GM10248 (cell line): ENCODE measurements at regions of chr12 and their contacts with region 1.

Region 1: DNA sequence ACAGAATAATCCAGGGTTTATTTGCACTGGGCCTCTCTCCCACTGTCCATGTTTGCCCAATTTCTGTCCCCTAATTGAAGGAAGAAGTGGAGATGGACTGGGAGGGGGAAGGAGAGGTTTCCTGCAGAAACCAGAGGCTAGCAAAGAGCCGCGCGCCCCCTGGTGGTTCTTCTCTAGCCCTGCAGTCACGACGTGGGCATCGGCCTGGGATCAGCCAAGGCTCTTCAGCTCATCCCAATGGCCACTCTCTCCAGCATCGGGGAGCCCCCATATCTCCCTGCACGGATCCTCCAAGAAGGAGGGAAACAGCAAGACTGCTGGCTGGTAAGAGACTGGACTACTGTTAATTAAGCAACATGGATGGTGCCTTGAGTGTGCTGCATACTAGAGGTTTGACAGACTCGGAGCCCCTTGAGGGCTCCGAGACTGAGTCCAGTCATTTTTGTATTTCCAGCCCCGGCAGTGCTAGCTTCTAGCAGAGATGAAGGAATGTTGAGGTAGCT is 18.7 kb downstream of the ZBTB39 start:
- DNase-seq: peak; percentile 81
- CTCF ChIP-seq: peak; percentile 92

Region 2: DNA sequence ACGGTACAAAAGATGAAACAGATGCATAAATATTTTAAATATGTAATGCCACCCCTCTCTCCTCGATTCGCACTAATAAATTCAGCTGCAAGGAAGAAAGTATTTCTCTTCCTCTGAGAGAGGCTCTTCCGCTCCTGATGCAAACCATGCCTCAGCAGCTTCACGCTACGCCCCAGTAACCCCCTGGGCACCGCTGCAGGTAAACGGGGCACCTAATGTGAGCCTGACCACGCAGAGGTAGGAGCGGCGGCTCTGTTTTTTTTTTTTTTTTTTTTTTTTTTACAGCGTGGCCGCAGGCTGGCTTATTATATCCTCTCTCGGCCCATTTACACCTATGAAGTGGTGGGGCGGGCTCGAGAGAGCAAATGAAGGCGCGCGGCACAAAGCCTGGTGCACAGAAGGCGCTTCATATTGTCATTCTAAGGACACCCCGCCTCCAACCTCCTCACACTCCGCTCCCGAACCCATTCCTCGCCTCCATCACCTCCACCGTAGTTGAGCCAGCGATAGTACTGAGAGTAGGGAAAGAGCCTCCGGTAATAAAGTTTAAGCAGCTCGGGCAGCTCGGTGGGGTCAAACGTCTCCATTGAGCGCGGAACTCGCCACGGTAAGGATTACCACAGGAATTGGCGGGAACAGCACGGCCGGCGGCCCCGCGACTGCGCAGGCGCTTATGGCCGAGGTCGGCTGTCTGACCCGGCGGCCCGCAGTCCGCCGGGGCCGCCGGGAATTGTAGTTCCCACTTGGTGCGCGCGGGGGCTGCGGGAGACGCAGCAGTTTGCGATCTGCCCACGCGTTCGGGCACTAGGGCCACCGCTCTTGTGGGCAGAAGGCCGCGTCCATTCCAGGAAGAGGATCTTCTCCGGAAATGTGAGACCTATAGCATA is 235.6 kb before region 1 on chr12 and contains the start of gene PRIM1:
- CTCF ChIA-PET with region 1: interaction called, 84 read pairs
- POLR2A ChIA-PET with region 1: no interaction called
- DNase-seq: peak; percentile 94
- CTCF ChIP-seq: no peak

Region 3: DNA sequence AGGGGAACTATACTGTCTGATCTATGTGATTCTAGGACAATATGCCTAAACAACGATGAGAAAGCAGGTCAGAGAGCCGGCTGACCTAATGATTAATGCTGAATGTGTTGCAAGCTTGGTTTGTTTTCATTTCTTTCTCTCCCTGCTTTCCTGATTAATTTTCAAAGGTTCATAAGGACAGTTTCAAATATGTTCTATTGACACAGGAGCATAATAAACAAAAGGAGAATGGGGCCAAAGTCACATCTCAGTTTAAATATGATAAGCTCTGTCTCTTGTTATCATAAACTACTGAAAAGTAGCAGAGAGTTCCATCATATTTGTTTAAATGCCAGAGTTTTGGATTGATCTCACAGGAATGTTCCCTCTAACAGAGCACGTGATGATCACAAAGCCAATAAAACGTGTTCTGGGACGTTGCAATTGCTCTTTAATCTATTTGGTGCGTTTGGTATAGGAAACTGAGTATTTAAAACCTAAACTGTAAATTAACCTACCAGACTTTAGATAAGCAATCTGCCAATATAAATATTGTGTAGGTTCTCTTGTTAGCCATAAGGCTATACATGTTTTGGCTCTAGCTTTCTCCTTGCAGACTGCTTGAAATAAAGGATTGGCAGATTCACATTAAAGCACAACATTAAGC is 228.2 kb before region 1 on chr12:
- CTCF ChIA-PET with region 1: interaction called, 84 read pairs
- POLR2A ChIA-PET with region 1: no interaction called
- DNase-seq: no peak
- CTCF ChIP-seq: no peak

Region 4: GRCh38 chr12:56766535-56766934 is 221.1 kb before region 1 on chr12:
- CTCF ChIA-PET with region 1: interaction called, 27 read pairs
- POLR2A ChIA-PET with region 1: no interaction called
- DNase-seq: peak; percentile 81
- CTCF ChIP-seq: no peak

Region 5: GRCh38 chr12:56839915-56840325 is 147.7 kb before region 1 on chr12:
- CTCF ChIA-PET with region 1: interaction called, 20 read pairs
- POLR2A ChIA-PET with region 1: no interaction called
- DNase-seq: peak; percentile 41
- CTCF ChIP-seq: peak; percentile 70

Region 6: GRCh38 chr12:56862264-56862663 is 125.3 kb before region 1 on chr12:
- CTCF ChIA-PET with region 1: no interaction called
- POLR2A ChIA-PET with region 1: no interaction called
- DNase-seq: no peak
- CTCF ChIP-seq: no peak